Upper lobe of right lung (tissue), 1 donor: ENCODE measurements at regions of chr18 and their contacts with region 1.

Region 1: GRCh38 chr18:21444465-21445023 is 156.0 kb downstream of the ESCO1 start:
- DNase-seq: no peak
- ATAC-seq: peak; percentile 68
- H3K4me3 ChIP-seq: no peak overlapping the region
- H3K27ac ChIP-seq: no peak overlapping the region
- H3K4me1 ChIP-seq: no peaks in the 10 kb centered on the region
- H3K27me3 ChIP-seq: no peaks in the 10 kb centered on the region
- CTCF ChIP-seq: peak; percentile 64

Region 2: DNA sequence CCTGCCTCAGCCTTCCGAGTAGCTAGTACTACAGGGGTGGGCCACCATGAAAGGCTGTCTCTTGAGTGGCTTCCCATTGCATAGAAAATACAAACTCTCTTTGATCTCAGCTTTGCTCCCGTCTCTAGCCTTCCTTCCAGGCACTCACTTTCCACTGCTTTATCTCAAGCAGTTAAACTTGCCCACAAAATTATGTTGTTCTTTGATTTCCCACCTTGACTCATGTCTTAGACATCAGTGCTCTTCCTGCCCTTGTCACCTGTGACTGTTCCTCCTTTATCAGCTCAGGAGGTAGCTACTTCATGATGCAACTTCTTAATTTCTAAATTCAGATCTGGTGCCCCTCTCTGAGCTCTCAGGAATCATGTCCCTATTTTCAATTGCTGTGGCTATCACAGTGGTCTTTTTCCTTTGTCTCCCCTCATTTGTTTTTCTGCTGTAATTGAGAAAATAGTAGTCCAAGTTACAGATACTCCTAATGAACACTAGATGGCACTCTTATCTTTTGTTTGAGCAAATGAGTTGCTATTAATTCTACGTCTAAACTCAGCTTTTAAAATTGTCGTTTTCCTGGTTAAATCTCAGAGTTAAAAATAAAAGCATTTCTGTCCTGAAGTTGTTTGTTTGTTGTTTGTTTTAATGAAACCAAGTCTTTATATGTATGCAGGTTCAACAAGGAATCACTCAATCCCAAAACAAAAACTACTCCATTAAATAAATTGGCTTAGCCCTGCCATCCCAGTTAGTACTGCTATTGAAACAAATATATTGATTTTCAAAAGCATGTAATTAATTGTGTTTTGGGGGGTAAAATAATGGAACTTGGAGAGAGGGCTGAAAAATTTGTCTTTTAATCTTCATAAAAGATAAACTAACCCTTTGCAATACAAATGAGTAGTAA is 249.4 kb before region 1 on chr18:
- intact Hi-C with region 1: loop called (anchors 5 kb)
- DNase-seq: no peak
- ATAC-seq: peak; percentile 61
- H3K4me3 ChIP-seq: no peak overlapping the region
- H3K27ac ChIP-seq: no peak overlapping the region
- H3K4me1 ChIP-seq: no peaks in the 10 kb centered on the region
- H3K27me3 ChIP-seq: no peaks in the 10 kb centered on the region
- CTCF ChIP-seq: peak; percentile 73